ENCODE measurements at regions of chr7 and their contacts with region 1.

Region 1: GRCh38 chr7:36280840-36281812 is 108.5 kb upstream of the ANLN start:
- DNase-seq: peak; percentile 61
- ATAC-seq: peak; percentile 78
- H3K4me3 Mint-ChIP-seq: no peak overlapping the region
- H3K27ac Mint-ChIP-seq: no peak overlapping the region
- H3K4me1 Mint-ChIP-seq: peaks cover 52% of the 10 kb centered on the region
- H3K27me3 Mint-ChIP-seq: no peaks in the 10 kb centered on the region

Region 2: GRCh38 chr7:35530124-35531109 is 750.7 kb before region 1 on chr7:
- CTCF ChIA-PET with region 1: no interaction called
- POLR2A ChIA-PET with region 1: no interaction called
- intact Hi-C with region 1: no loop called
- DNase-seq: no peak
- ATAC-seq: no peak
- H3K4me3 Mint-ChIP-seq: no peak overlapping the region
- H3K27ac Mint-ChIP-seq: no peak overlapping the region
- H3K4me1 Mint-ChIP-seq: no peaks in the 10 kb centered on the region
- H3K27me3 Mint-ChIP-seq: peaks cover 6% of the 10 kb centered on the region

Region 3: DNA sequence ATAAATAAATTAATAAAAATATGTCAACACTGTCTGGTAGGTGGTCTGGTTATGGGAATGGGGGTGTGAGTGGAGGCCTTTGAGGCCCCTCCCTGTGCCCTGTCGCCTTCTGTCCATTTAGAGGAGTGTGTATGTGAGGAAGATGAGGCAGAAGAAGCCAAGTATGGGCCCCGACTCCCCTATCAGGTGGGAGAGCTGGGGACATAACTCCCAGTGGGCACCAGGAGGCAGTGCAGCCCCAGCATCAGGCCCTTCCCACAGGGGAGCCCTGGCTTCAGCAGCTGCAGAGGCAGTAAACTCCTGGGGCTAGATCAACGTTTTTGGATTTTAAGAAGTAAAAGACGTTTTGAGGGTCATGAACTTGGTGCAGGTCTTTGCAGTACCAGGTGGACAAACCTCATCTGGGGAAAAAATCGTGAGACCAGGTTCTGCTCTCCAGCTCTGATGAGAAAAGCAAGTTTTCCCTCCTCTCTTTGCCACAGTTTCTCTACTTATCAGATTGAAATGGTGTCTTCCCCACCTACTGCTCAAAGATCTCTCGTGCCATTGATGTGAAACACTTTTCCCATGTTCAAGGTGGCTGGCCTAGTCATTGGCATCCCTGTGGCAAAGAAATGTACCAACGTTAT is 295.9 kb before region 1 on chr7:
- CTCF ChIA-PET with region 1: interaction called, 31 read pairs
- POLR2A ChIA-PET with region 1: no interaction called
- intact Hi-C with region 1: no loop called
- DNase-seq: peak; percentile 87
- ATAC-seq: peak; percentile 100
- H3K4me3 Mint-ChIP-seq: no peak overlapping the region
- H3K27ac Mint-ChIP-seq: no peak overlapping the region
- H3K4me1 Mint-ChIP-seq: no peaks in the 10 kb centered on the region
- H3K27me3 Mint-ChIP-seq: no peaks in the 10 kb centered on the region

Region 4: DNA sequence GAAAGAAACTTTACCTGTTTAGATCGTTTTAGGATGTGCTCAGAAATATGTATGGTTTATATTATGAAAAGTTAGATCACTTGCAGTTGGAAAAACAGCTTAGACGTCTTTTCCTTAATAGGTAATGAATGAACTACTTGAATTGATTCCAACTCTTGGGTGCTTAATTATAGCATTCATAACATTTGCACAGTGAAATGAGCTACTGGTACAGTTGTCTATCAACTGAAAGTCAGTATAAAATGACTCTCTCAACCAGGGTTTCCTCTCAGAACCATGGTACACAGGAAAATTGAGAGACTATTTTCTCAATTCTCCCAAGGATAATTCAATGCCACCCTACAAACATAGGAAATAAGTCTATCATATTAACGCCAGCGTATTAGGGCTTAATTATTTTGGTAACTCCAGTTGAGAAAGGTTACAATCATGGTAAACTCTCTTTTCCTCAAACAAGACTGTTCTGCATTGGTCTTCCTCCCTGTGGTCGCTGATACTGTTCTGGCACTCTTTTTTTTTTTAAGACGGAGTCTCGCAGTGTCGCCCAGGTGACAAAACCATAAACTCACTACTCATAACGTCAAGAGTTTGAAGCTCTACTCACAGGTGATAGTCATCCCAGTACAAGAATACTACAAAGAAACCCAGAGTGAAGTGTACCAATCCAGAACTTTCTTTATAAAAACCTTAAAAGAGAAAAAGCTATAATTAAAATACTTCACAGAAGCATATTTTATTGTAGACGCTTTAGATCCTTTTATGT is 110.5 kb after region 1 on chr7:
- CTCF ChIA-PET with region 1: no interaction called
- POLR2A ChIA-PET with region 1: no interaction called
- intact Hi-C with region 1: no loop called
- DNase-seq: peak; percentile 36
- ATAC-seq: peak; percentile 62
- H3K4me3 Mint-ChIP-seq: peak overlapping the region; percentile 87
- H3K27ac Mint-ChIP-seq: peak overlapping the region; percentile 28
- H3K4me1 Mint-ChIP-seq: peaks cover 32% of the 10 kb centered on the region
- H3K27me3 Mint-ChIP-seq: peaks cover 11% of the 10 kb centered on the region